Dorsolateral prefrontal cortex (tissue), 120 donors: ENCODE measurements at regions of chr11 and their contacts with region 1.

Region 1: DNA sequence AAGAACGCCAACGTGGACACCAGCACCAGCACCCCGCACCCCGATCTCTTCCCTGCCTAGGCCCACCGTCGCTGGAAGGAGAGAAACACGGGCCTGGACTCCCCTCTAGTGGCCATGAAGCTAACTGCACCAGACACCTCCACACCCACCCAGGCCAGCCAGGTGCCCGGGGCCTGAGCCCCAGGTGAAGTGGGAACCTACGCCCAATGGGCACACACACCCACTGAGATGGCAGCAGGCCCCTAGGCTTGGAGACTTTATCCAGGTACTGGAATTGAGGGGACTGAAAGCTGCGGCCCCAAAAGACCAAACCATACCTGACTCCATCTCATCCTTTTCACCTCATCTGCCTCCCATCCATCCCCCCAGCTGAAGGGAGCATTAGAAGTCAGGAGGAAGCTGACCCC is 81.0 kb downstream of the BUD13 start:
- DNase-seq: peak in 7 of 10 donors; percentile 28 to 70 (median 58)
- H3K4me3 ChIP-seq: no peak overlapping the region
- H3K27ac ChIP-seq: no peak overlapping the region
- H3K27me3 ChIP-seq: peaks cover 0 to 2% (median 0%) of the 10 kb centered on the region in 45 donors
- CTCF ChIP-seq: peak; percentile 53 to 88 (median 78)

Region 2: GRCh38 chr11:116217006-116217405 is 474.8 kb before region 1 on chr11:
- intact Hi-C with region 1: loop called in 1 of 2 experiments (anchors 10 kb)
- DNase-seq: peak; percentile 36 to 76 (median 62)
- H3K4me3 ChIP-seq: no peak overlapping the region
- H3K27ac ChIP-seq: no peak overlapping the region
- H3K27me3 ChIP-seq: no peaks in the 10 kb centered on the region
- CTCF ChIP-seq: peak in 54 of 56 donors; percentile 31 to 84 (median 70)

Region 3: DNA sequence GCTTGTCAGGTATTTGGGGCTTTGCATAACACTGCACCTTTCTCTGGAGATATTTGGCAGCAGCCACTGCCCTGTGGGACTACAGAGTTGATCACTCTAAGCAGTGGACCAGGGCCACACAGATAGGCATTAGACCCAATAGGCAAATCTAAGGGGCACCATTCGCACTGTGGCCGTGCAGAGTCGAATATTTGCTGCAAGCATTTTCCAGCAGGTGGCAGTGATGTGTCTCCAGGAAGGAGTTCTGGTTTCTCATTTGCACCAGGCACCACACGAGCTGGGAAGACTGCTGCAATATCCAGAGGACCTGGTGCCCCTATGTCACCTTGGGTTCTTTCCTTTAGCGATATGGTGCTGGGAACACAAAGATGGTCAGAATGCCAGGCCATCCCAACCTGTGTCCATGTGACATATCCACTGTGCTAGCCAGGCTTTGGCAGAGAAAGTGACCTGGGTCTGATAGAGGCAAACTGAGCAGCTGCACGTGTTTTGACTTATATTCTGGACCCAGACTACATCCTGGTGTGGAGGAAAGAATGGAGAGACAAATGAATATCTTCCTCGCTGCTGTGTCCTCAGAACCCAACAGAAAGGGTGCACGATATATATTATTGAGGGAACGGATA is 237.6 kb before region 1 on chr11:
- intact Hi-C with region 1: loop called in 1 of 2 experiments (anchors 5 kb)
- DNase-seq: peak in 6 of 10 donors; percentile 7 to 60 (median 50)
- H3K4me3 ChIP-seq: no peak overlapping the region
- H3K27ac ChIP-seq: no peak overlapping the region
- H3K27me3 ChIP-seq: no peaks in the 10 kb centered on the region
- CTCF ChIP-seq: peak in 55 of 56 donors; percentile 32 to 73 (median 60)

Region 4: GRCh38 chr11:116762132-116762531 is 70.4 kb after region 1 on chr11:
- intact Hi-C with region 1: no loop called
- DNase-seq: no peak
- H3K4me3 ChIP-seq: no peak overlapping the region
- H3K27ac ChIP-seq: no peak overlapping the region
- H3K27me3 ChIP-seq: no peaks in the 10 kb centered on the region
- CTCF ChIP-seq: no peak